ENCODE measurements at regions of chr1 and their contacts with region 1.

Region 1: GRCh38 chr1:62436466-62437256 is at the start of gene USP1:
- DNase-seq: peak; percentile 99
- H3K4me3 Mint-ChIP-seq: peak within 1 kb of the TSS; percentile 89
- H3K27ac Mint-ChIP-seq: peak within 1 kb of the TSS; percentile 95
- H3K4me1 Mint-ChIP-seq: peaks cover 26% of the 10 kb centered on the region
- H3K27me3 Mint-ChIP-seq: no peaks in the 10 kb centered on the region
- total RNA-seq, gene USP1: 77.4 and 81.5 TPM in 2 replicates

Region 2: DNA sequence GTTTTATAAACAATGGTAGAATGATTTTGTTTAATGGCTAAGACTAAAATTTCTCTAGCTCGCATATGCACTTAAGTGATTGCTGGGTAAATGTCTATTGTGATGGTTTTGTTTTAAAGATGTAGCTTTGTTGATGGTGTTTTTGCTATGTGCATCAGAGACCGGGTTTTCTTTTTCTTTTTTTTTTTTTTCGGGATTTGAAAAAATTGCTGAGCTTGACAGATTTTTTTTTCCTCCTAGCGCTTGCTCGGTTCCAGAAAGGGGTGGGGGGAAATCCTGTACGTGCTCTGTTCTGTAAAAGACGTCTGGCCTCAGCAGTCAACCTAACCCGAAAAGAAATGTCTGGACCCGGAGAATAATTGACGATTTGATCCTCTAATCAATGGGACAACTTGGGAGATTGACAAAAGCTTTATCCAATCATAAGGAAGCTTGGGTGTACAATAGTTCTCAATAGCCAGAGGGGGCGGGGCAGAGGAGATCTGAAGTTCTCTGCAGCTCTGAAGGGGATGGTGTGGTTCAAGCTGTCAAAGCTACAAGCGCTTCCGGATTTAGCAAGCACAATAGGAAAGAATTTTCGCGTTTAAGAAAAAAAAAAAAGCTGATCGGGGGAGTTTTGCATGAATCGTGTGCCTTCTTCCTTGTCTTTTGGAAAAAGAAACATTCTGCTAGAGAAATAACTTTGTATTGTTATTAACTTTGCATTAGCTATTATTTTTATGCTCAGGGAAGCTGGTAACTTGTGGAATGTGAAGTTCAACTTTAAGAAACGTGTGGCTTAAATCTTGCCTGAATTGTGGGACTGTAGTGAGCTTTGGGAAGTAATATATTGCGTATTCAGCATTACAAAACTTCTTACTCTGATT is 1358.8 kb before region 1 on chr1:
- intact Hi-C with region 1: loop called (anchors 10 kb)
- DNase-seq: peak; percentile 96
- H3K4me3 Mint-ChIP-seq: peak overlapping the region; percentile 92
- H3K27ac Mint-ChIP-seq: peak overlapping the region; percentile 86
- H3K4me1 Mint-ChIP-seq: peaks cover 39% of the 10 kb centered on the region
- H3K27me3 Mint-ChIP-seq: peaks cover 50% of the 10 kb centered on the region

Region 3: GRCh38 chr1:61741711-61742619 is 694.7 kb before region 1 on chr1 and contains the start of gene PATJ:
- intact Hi-C with region 1: loop called (anchors 5 kb)
- DNase-seq: peak; percentile 89
- H3K4me3 Mint-ChIP-seq: peak within 1 kb of the TSS; percentile 93
- H3K27ac Mint-ChIP-seq: peak within 1 kb of the TSS; percentile 88
- H3K4me1 Mint-ChIP-seq: peaks cover 18% of the 10 kb centered on the region
- H3K27me3 Mint-ChIP-seq: no peaks in the 10 kb centered on the region
- total RNA-seq, gene PATJ: 5.0 and 5.1 TPM in 2 replicates

Region 4: DNA sequence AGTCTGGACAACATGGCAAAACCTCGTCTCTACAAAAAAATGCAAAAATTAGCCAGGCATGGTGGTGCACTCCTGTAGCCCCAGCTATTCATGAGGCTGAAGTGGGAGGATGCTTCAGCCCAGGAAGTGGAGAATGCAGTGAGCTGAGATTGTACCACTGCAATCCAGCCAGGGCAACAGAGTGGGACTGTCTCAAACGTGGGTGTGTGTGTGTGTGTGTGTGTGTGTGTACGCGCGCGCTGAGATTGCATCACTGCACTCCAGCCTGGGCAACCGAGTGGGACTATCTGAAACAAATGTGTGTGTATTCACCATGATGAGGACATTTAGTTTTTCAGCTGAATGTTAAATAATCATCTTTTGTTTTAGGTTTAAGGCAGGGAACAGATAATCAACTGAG is 21.3 kb after region 1 on chr1:
- intact Hi-C with region 1: no loop called
- DNase-seq: no peak
- H3K4me3 Mint-ChIP-seq: no peak overlapping the region
- H3K27ac Mint-ChIP-seq: no peak overlapping the region
- H3K4me1 Mint-ChIP-seq: no peaks in the 10 kb centered on the region
- H3K27me3 Mint-ChIP-seq: no peaks in the 10 kb centered on the region

Region 5: GRCh38 chr1:62783723-62784508 is 347.3 kb after region 1 on chr1 and contains the start of gene ATG4C:
- intact Hi-C with region 1: loop called (anchors 1 kb)
- DNase-seq: peak; percentile 97
- H3K4me3 Mint-ChIP-seq: no peak within 1 kb of the TSS
- H3K27ac Mint-ChIP-seq: no peak within 1 kb of the TSS
- H3K4me1 Mint-ChIP-seq: peaks cover 6% of the 10 kb centered on the region
- H3K27me3 Mint-ChIP-seq: peaks cover 9% of the 10 kb centered on the region
- total RNA-seq, gene ATG4C: 8.9 and 10.2 TPM in 2 replicates

Region 6: GRCh38 chr1:63522891-63523728 is 1086.4 kb after region 1 on chr1 and contains the starts of genes EFCAB7 and ITGB3BP:
- intact Hi-C with region 1: loop called (anchors 2 kb)
- DNase-seq: peak; percentile 96
- H3K4me3 Mint-ChIP-seq: peak within 1 kb of the TSS; percentile 87
- H3K27ac Mint-ChIP-seq: peak within 1 kb of the TSS; percentile 98
- H3K4me1 Mint-ChIP-seq: peaks cover 29% of the 10 kb centered on the region
- H3K27me3 Mint-ChIP-seq: no peaks in the 10 kb centered on the region
- total RNA-seq, gene EFCAB7: 6.6 and 7.8 TPM in 2 replicates
- total RNA-seq, gene ITGB3BP: 51.1 and 53.4 TPM in 2 replicates